Left colon (tissue), 2 donors: ENCODE measurements at regions of chr1 and their contacts with region 1.

Region 1: GRCh38 chr1:234716908-234717375 is 107.0 kb upstream of the IRF2BP2 start:
- DNase-seq: peak; percentile 47 to 55
- ATAC-seq: peak; percentile 38

Region 2: GRCh38 chr1:234610348-234611152 is 106.4 kb before region 1 on chr1:
- intact Hi-C with region 1: loop called in 1 of 2 experiments (anchors 5 kb)
- DNase-seq: peak; percentile 96
- ATAC-seq: peak; percentile 50